ENCODE measurements at regions of chr19 and their contacts with region 1.

Region 1: GRCh38 chr19:23686621-23687423 is at the start of gene ZNF675:
- DNase-seq: peak; percentile 86 to 88
- H3K4me3 ChIP-seq: peak within 1 kb of the TSS; percentile 88 to 99 (median 95)
- H3K27ac ChIP-seq: peak within 1 kb of the TSS; percentile 97
- H3K4me1 ChIP-seq: 0 out of 7 replicates have a peak, but pooled peaks cover 0 to 4% (median 0%) of the 10 kb centered on the region in 4 experiments
- H3K27me3 ChIP-seq: no peaks in the 10 kb centered on the region
- CTCF ChIP-seq: no peak
- EP300 ChIP-seq: no peak
- POLR2A ChIP-seq: peak; percentile 78 to 91
- RAD21 ChIP-seq: no peak
- total RNA-seq, gene ZNF675: 26.1 and 27.8 TPM in 2 replicates

Region 2: GRCh38 chr19:23673132-23673531 is 13.7 kb before region 1 on chr19:
- CTCF ChIA-PET with region 1: no interaction called
- POLR2A ChIA-PET with region 1: interaction called, 10 read pairs
- DNase-seq: no peak
- H3K4me3 ChIP-seq: no peak overlapping the region
- H3K27ac ChIP-seq: no peak overlapping the region
- H3K4me1 ChIP-seq: no peaks in the 10 kb centered on the region
- H3K27me3 ChIP-seq: no peaks in the 10 kb centered on the region
- CTCF ChIP-seq: no peak
- EP300 ChIP-seq: no peak
- POLR2A ChIP-seq: no peak
- RAD21 ChIP-seq: no peak

Region 3: GRCh38 chr19:23758187-23759074 is 71.6 kb after region 1 on chr19 and contains the start of gene ZNF681:
- CTCF ChIA-PET with region 1: no interaction called
- POLR2A ChIA-PET with region 1: interaction called, 20 read pairs
- DNase-seq: peak; percentile 46 to 57
- H3K4me3 ChIP-seq: peak within 1 kb of the TSS; percentile 61 to 79 (median 70)
- H3K27ac ChIP-seq: peak within 1 kb of the TSS; percentile 60; the same call in 1 of the 2 replicates
- H3K4me1 ChIP-seq: no peaks in the 10 kb centered on the region; a peak in 1 of 7 replicates
- H3K27me3 ChIP-seq: no peaks in the 10 kb centered on the region; a peak in 1 of 7 replicates
- CTCF ChIP-seq: no peak
- EP300 ChIP-seq: no peak
- POLR2A ChIP-seq: peak; percentile 58 to 81
- RAD21 ChIP-seq: no peak
- total RNA-seq, gene ZNF681: 6.8 and 7.9 TPM in 2 replicates

Measured in H1 (cell line).